Posterior cingulate gyrus (tissue), 11 donors: ENCODE measurements at regions of chr1 and their contacts with region 1.

Region 1: DNA sequence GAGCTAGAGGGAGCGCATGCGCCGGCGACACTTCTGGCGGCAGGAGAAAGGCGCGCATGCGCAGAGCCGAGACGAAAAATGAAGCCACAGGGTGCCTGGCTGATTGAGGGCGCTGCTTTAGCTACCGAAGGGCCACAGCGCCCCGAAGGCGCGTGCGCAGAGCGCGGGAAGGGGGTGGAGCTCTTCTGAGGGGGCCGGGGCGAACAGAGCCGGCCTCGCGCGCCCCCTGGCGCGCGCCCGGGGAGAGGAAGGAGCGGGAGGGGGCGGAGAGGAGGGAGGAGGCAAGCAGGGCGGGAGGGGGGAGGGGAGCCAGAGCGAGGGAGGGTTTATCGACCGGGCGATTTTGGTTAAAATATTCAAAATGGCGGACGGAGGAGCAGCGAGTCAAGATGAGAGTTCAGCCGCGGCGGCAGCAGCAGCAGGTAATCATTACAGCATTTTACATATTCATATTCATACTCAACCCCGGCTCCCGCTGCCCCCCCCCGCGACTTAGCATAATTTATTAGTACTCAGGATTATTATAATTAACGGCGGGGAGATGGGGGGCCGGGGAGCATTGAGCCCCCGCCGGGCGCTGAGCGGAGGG is at the start of gene POU2F1:
- DNase-seq: peak; percentile 95 to 99 (median 96)

Region 2: DNA sequence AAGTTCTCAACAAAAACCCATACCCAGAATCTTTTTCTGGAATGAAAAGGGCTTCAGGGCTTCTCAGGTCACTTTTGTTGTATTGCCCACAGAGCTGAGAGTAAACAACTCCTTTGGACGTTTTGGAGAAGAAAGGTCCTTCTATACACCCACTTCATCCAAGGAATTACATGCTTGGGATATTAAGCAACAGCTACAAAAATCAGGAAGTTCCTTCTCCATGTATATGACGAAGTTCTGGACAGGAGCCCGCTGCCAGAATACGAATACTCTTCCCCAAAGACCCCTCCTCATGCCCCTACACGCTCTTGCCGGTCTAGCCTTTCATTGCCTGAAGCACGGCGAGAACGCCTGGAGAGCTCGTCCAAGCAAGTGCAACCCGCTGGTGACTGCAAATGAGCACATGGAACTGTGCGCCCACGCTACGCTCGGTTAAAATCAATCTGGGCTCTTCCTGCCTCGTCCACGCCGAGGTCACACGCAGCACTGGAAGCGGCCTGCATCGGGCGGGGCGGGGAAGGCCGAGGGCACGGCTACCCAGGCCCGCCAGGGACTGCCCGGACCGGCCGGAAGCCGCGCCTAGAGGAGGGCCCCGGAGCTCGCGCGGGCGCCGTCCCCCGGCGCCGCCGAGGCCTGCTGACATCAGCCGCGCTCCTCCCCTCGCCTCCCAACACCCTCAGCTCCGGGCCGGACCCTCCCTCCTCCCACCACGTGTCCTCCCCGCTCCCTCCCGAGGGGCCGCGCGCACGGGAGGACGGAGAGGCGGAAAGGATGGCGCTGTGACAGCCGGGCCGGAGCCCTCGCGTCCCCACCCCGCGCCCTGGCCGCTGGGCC is 381.6 kb before region 1 on chr1 and contains the start of gene POGK:
- intact Hi-C with region 1: loop called (anchors 2 kb)
- DNase-seq: peak; percentile 89 to 99 (median 92)

Region 3: DNA sequence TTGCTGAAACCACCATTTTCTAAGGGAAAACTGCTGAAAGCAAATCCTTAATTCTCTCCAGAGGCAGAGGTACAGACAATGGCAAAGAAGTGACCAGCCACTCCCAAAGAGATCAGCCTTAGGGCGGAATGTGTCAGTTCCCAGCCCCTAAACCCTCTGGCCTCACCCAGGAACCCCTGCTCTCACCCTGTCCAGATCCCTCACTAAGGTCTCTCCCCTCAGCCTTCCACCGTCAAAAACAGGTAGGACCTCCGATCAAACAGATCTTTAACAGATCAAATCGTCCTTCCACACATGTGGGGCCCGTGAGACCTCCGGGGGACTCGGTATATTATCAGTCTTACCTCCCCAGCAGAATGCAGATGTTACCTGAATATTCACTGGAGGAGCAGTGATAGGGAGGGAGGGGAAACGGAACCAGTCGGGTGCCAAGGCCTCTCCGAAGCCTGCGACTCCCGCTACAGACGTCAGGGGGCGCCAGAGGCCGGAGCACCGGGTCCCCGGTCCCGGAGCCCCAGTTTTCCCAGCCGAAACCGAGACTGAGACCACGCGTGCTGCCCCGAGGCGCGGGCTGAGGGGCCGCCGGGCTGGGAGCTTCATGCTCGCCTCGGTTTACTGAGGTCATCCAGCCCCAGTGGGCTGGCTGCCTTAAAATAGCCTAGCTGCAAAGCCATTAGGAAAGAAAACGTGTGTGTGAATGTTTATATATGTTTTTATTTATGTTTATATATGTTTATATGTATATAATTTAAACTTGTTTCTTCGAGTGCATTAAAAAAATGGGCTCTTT is 154.1 kb before region 1 on chr1:
- intact Hi-C with region 1: loop called (anchors 1 kb)
- DNase-seq: peak; percentile 65 to 98 (median 84)

Region 4: GRCh38 chr1:167121375-167122120 is 99.1 kb before region 1 on chr1:
- intact Hi-C with region 1: loop called (anchors 10 kb)
- DNase-seq: peak; percentile 37 to 94 (median 66)

Region 5: GRCh38 chr1:167161242-167161641 is 59.4 kb before region 1 on chr1:
- intact Hi-C with region 1: no loop called
- DNase-seq: no peak

Region 6: GRCh38 chr1:167291539-167292185 is 71.0 kb after region 1 on chr1:
- intact Hi-C with region 1: no loop called
- DNase-seq: no peak

Region 7: GRCh38 chr1:167387251-167387910 is 166.8 kb after region 1 on chr1:
- intact Hi-C with region 1: no loop called
- DNase-seq: no peak

Region 8: GRCh38 chr1:167533851-167534300 is 313.2 kb after region 1 on chr1:
- intact Hi-C with region 1: loop called (anchors 5 kb)
- DNase-seq: peak in 9 of 10 donors; percentile 59 to 95 (median 74)

Region 9: GRCh38 chr1:168082008-168082876 is 861.6 kb after region 1 on chr1:
- intact Hi-C with region 1: no loop called
- DNase-seq: peak; percentile 51 to 95 (median 78)